ENCODE measurements at regions of chr4 and their contacts with region 1.

Region 1: GRCh38 chr4:88211473-88212252 is 53.2 kb upstream of the ABCG2 start:
- DNase-seq: peak in 10 of 14 experiments; percentile 9 to 76 (median 38)
- ATAC-seq: no peak
- H3K4me3 ChIP-seq: no peak overlapping the region
- H3K4me3 Mint-ChIP-seq: no peak overlapping the region
- H3K27ac ChIP-seq: no peak overlapping the region
- H3K27ac Mint-ChIP-seq: no peak overlapping the region
- H3K4me1 ChIP-seq: no peaks in the 10 kb centered on the region
- H3K4me1 Mint-ChIP-seq: no peaks in the 10 kb centered on the region
- H3K27me3 ChIP-seq: no peaks in the 10 kb centered on the region
- H3K27me3 Mint-ChIP-seq: no peaks in the 10 kb centered on the region
- CTCF ChIP-seq: peak; percentile 82

Region 2: GRCh38 chr4:87353592-87353991 is 858.1 kb before region 1 on chr4:
- CTCF ChIA-PET with region 1: no interaction called
- POLR2A ChIA-PET with region 1: no interaction called
- intact Hi-C with region 1: loop called in 1 of 2 experiments (anchors 5 kb)
- DNase-seq: peak in 13 of 14 experiments; percentile 4 to 63 (median 32)
- ATAC-seq: peak; percentile 74
- H3K4me3 ChIP-seq: no peak overlapping the region
- H3K4me3 Mint-ChIP-seq: no peak overlapping the region
- H3K27ac ChIP-seq: no peak overlapping the region
- H3K27ac Mint-ChIP-seq: no peak overlapping the region
- H3K4me1 ChIP-seq: no peaks in the 10 kb centered on the region
- H3K4me1 Mint-ChIP-seq: peaks cover 6% of the 10 kb centered on the region
- H3K27me3 ChIP-seq: no peaks in the 10 kb centered on the region
- H3K27me3 Mint-ChIP-seq: no peaks in the 10 kb centered on the region
- CTCF ChIP-seq: peak; percentile 81

Region 3: GRCh38 chr4:87679449-87680169 is 532.1 kb before region 1 on chr4:
- CTCF ChIA-PET with region 1: interaction called, 3 read pairs
- POLR2A ChIA-PET with region 1: no interaction called
- intact Hi-C with region 1: loop called in 1 of 2 experiments (anchors 1 kb)
- DNase-seq: peak in 8 of 14 experiments; percentile 2 to 57 (median 16)
- ATAC-seq: no peak
- H3K4me3 ChIP-seq: no peak overlapping the region
- H3K4me3 Mint-ChIP-seq: no peak overlapping the region
- H3K27ac ChIP-seq: no peak overlapping the region
- H3K27ac Mint-ChIP-seq: no peak overlapping the region
- H3K4me1 ChIP-seq: no peaks in the 10 kb centered on the region
- H3K4me1 Mint-ChIP-seq: no peaks in the 10 kb centered on the region
- H3K27me3 ChIP-seq: no peaks in the 10 kb centered on the region
- H3K27me3 Mint-ChIP-seq: peaks cover 10% of the 10 kb centered on the region
- CTCF ChIP-seq: peak; percentile 69

Region 4: DNA sequence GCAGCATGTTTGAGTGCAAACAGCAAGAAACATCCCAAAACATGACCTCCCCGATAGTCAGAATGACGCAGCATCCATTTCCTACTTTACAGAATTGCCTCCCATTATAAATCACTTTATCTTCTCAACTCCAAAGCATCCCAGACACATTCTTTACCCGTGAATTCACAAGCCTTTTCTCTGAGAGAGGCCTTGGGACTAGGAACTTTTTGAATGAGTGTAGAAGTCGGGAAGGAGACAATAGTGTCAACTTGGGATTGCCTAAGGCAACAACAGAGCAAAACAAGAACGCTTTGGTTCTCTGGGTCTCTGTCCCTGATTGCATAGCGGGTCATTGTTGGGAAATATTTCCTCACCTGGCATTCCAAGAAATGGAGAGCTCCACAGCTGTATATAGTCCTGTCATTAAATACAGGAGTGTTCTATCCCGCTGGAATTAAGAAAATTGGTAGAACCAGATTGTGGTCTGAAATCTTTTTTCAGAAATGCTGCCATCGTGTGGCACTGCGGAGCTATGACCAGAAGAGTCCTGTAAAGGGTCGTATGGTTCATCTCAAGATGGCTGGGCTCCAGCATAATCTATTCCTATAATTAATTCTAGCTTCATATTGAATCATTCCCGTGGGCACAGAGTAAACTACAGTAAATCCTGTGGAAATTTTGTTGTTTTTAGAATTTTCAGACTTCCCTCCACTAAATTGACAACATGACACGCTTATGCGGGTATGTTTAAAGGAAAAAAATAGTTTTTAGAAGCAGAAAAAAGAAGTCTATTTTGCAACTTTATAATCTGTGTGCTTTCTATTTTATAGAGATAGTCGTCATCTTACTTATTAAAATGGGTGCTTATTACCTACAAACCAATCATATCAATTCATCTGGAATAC is 238.1 kb before region 1 on chr4:
- CTCF ChIA-PET with region 1: interaction called, 3 read pairs
- POLR2A ChIA-PET with region 1: no interaction called
- intact Hi-C with region 1: loop called in 1 of 2 experiments (anchors 5 kb)
- DNase-seq: peak in 9 of 14 experiments; percentile 2 to 52 (median 17)
- ATAC-seq: peak; percentile 68
- H3K4me3 ChIP-seq: no peak overlapping the region
- H3K4me3 Mint-ChIP-seq: no peak overlapping the region
- H3K27ac ChIP-seq: no peak overlapping the region
- H3K27ac Mint-ChIP-seq: no peak overlapping the region
- H3K4me1 ChIP-seq: peaks cover 5% of the 10 kb centered on the region
- H3K4me1 Mint-ChIP-seq: peaks cover 16% of the 10 kb centered on the region
- H3K27me3 ChIP-seq: peaks cover 6 to 49% of the 10 kb centered on the region in 2 experiments
- H3K27me3 Mint-ChIP-seq: peaks cover 70% of the 10 kb centered on the region
- CTCF ChIP-seq: peak; percentile 80

Region 5: GRCh38 chr4:88583631-88584475 is 372.2 kb after region 1 on chr4:
- CTCF ChIA-PET with region 1: no interaction called
- POLR2A ChIA-PET with region 1: no interaction called
- intact Hi-C with region 1: no loop called
- DNase-seq: no peak
- ATAC-seq: no peak
- H3K4me3 ChIP-seq: no peak overlapping the region
- H3K4me3 Mint-ChIP-seq: no peak overlapping the region
- H3K27ac ChIP-seq: no peak overlapping the region
- H3K27ac Mint-ChIP-seq: no peak overlapping the region
- H3K4me1 ChIP-seq: no peaks in the 10 kb centered on the region
- H3K4me1 Mint-ChIP-seq: no peaks in the 10 kb centered on the region
- H3K27me3 ChIP-seq: no peaks in the 10 kb centered on the region
- H3K27me3 Mint-ChIP-seq: no peaks in the 10 kb centered on the region
- CTCF ChIP-seq: no peak

Region 6: DNA sequence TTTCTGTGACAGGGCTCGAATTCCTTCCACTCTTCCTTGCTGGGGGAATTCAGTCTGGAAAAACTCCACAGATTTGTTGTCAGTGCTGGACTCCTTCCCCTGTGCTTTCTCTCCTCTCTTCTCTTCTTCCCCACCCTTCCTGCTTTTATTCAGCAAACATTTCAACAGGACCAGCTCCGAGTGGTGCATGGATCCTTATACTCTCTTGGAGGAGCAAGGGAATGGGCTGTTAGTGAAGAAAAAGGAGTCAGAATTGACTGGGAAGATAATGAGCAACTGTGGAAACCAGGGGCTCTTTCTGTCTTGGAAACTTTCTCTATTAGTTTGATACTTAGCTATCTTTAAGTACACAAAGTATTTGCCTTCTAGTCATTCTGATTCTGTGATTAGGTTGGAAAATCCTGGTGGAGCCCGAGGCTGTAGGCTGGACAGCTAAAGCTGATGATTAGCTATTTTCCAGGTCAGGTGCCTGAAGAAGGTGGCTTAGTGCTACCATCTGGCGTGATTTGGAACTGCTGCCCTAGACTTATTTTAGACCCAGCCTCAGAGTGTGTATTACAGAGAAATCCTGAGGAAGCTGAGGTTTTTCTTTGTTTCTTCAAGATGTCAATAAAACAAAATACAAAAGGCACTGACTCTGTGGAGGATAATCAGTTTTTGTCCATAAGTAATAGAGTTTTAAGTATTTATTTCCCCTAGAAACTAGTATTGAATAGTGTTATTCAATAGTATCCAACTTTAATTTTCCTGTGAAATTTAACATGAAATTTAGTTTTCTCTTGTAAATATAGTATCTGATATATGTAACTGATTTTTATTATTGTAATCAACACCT is 447.6 kb after region 1 on chr4:
- CTCF ChIA-PET with region 1: no interaction called
- POLR2A ChIA-PET with region 1: no interaction called
- intact Hi-C with region 1: loop called in 1 of 2 experiments (anchors 10 kb)
- DNase-seq: peak in 12 of 14 experiments; percentile 11 to 68 (median 28)
- ATAC-seq: peak; percentile 88
- H3K4me3 ChIP-seq: no peak overlapping the region
- H3K4me3 Mint-ChIP-seq: no peak overlapping the region
- H3K27ac ChIP-seq: no peak overlapping the region
- H3K27ac Mint-ChIP-seq: peak overlapping the region; percentile 34
- H3K4me1 ChIP-seq: no peaks in the 10 kb centered on the region
- H3K4me1 Mint-ChIP-seq: peaks cover 33% of the 10 kb centered on the region
- H3K27me3 ChIP-seq: no peaks in the 10 kb centered on the region
- H3K27me3 Mint-ChIP-seq: no peaks in the 10 kb centered on the region
- CTCF ChIP-seq: peak; percentile 68